Heart left ventricle (tissue), 16 donors: ENCODE measurements at regions of chr15 and their contacts with region 1.

Region 1: GRCh38 chr15:85480923-85481322 is 100.5 kb downstream of the AKAP13 start:
- DNase-seq: no peak
- ATAC-seq: no peak
- H3K4me3 ChIP-seq: no peak overlapping the region
- H3K27ac ChIP-seq: no peak overlapping the region
- H3K4me1 ChIP-seq: peaks cover 0 to 90% (median 60%) of the 10 kb centered on the region in 12 donors
- H3K27me3 ChIP-seq: no peaks in the 10 kb centered on the region
- CTCF ChIP-seq: no peak
- POLR2A ChIP-seq: no peak

Region 2: GRCh38 chr15:85397926-85398325 is 83.0 kb before region 1 on chr15:
- intact Hi-C with region 1: no loop called
- DNase-seq: no peak
- ATAC-seq: peak in 1 of 4 donors; percentile 53
- H3K4me3 ChIP-seq: no peak overlapping the region
- H3K27ac ChIP-seq: peak overlapping the region in 1 of 12 donors; percentile 27
- H3K4me1 ChIP-seq: peaks cover 0 to 86% (median 64%) of the 10 kb centered on the region in 12 donors
- H3K27me3 ChIP-seq: no peaks in the 10 kb centered on the region
- CTCF ChIP-seq: no peak
- POLR2A ChIP-seq: no peak

Region 3: GRCh38 chr15:85430406-85431204 is 50.3 kb before region 1 on chr15:
- intact Hi-C with region 1: loop called in 1 of 10 experiments (anchors 2 kb)
- DNase-seq: no peak
- ATAC-seq: peak in 1 of 4 donors; percentile 12
- H3K4me3 ChIP-seq: no peak overlapping the region
- H3K27ac ChIP-seq: peak overlapping the region in 1 of 12 donors; percentile 2
- H3K4me1 ChIP-seq: peaks cover 0 to 76% (median 47%) of the 10 kb centered on the region in 12 donors
- H3K27me3 ChIP-seq: no peaks in the 10 kb centered on the region
- CTCF ChIP-seq: no peak
- POLR2A ChIP-seq: no peak